ENCODE measurements at regions of chr13 and their contacts with region 1.

Region 1: DNA sequence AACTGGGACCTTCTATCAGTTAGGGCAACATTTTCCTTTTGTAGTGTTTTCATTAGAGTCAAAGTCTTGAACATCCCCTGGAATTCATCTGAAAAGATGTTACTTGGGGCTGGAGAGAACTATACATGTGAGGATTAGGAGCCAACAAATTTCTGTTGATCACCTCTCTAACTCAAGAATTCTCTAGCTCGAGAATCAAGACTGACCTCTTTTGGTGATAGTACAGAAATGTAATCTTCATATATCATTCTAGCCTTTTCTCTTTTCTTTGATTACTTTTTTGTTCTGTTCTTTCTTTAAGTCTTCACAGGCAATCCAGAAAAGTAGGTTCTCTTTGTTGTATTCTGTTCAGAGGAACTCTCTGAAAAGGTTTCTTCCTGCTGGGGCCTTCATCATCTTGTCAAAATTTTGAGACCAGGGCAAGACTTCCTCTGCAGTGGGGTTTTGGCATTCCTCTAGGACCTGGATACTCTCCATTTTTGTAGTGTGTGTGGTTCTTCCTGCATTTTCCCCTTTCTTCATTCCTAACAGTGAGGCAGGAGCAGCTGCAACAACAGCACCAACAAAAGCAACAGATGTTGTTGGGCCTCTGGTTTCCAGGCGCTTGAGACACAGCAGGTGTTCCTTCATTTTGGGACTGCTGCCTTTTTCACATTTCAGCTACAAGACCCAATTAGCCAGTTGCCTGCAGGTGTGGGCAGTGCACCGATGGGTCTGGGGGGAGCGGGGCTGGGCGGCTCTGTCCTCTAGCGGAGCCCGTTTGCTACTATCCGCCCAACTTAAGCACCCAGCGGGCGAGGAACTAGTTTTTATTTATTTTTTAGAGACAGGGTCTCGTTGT is 26.2 kb downstream of the ELF1 start:
- DNase-seq: peak; percentile 44
- H3K4me3 ChIP-seq: no peak overlapping the region
- H3K27ac ChIP-seq: no peak overlapping the region
- H3K4me1 ChIP-seq: peaks cover 4% of the 10 kb centered on the region
- H3K27me3 ChIP-seq: no peaks in the 10 kb centered on the region
- CTCF ChIP-seq: peak; percentile 49

Region 2: DNA sequence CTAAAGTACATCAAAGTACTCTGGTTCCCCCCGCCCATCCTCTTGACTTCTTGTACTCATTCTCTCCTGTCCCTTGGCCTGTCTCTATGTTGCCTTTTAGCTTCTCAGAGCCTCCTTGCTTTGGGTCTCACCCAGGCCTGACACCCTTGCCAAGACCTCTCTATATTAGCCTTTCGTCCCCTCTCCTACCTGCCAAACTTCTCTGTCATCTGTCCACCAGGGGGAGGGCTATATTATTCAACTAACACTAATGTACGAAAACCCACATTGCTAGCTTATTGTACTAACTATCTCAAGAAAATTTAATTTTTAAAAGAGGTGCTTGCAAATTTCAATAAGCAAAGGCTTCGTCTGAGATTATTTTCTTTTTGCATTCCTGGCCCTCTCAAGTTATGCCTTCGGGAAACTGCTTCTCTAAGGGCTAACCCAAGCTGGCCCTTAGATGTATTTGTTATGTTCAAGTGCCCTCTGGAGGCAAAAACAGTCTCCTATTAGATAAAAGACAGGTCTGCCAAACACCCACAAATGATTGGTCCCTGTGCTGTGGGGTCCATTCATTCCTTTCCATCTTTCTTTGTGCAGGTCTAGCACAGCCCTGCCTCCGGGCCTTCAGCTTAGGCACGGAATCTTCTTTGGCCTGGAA is 215.6 kb before region 1 on chr13:
- CTCF ChIA-PET with region 1: interaction called, 3 read pairs
- POLR2A ChIA-PET with region 1: no interaction called
- intact Hi-C with region 1: loop called (anchors 1 kb)
- DNase-seq: peak; percentile 75
- H3K4me3 ChIP-seq: peak overlapping the region; percentile 24
- H3K27ac ChIP-seq: no peak overlapping the region
- H3K4me1 ChIP-seq: peaks cover 6% of the 10 kb centered on the region
- H3K27me3 ChIP-seq: no peaks in the 10 kb centered on the region
- CTCF ChIP-seq: peak; percentile 75